ENCODE measurements at regions of chr21 and their contacts with region 1.

Region 1: DNA sequence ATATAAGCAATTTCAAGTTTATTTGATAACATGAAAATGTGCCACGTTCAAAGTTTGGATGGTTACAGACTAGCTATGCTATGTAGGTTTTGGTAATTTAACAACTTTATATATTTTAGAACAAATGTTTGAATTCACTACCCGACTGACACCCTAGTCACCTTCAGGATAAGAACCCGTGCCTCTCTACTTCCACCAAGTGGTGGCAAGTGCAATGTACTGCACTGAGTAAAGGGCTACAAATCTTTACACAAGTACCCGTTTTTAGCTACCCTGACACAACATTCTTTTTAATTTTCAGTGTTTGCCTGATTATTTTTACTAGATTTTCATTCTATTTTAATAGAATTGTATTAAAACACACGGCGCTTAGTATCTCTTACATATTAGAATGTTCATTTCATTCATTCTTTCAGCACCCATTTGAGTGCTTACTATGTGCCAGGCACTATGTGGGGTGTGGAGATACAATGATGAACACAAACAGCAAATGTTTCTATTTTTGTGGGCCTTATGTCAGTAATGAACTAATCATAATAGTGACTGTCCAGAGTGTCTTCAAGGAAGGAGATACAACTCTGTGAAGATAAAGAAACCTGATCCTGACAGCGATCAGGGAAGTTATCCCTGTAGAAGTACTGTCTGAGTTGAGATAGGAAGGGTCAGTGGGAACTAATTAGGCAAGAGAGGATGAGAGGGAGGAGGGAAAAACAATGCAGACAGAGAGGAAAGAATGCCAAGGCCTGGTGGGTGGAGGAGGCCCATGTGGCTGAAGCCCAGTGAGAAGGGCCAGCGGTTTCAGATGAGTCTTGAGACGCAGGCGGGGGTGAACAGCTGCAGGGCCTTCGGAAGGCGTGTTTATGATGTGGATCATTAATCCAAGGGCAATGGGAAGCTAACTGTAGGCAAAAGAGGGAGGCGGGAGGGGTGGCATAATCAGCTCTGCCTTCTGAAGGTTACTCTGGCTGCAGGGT is 3.8 kb downstream of the LCA5L start:
- DNase-seq: no peak
- H3K4me3 ChIP-seq: no peak overlapping the region
- H3K27ac ChIP-seq: no peak overlapping the region
- H3K4me1 ChIP-seq: peaks cover 0 to 7% (median 1%) of the 10 kb centered on the region in 4 experiments; a peak in 4 of 7 replicates
- H3K27me3 ChIP-seq: no peaks in the 10 kb centered on the region
- CTCF ChIP-seq: peak; percentile 35 to 80 (median 78)
- EP300 ChIP-seq: no peak
- POLR2A ChIP-seq: no peak
- RAD21 ChIP-seq: peak; percentile 82 to 89

Region 2: DNA sequence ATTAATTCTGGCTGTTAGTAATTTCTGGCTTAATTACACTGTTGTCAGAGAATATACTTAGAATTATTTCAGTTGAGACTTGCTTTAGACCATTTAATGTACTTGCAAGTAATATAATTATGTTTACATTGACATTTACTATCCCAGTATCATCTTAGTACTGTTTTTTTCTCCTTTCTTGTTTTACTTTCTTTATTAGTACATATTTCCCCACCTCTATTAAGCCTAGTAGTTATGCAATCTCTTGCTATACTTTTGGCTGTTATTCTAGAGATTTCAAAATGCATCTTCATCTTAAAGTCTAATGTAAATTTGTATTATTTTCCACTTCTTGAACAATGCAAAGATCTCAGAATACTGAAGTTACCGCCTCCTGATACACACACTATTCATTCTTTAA is 152.8 kb before region 1 on chr21:
- CTCF ChIA-PET with region 1: no interaction called
- POLR2A ChIA-PET with region 1: no interaction called
- DNase-seq: no peak
- H3K4me3 ChIP-seq: no peak overlapping the region
- H3K27ac ChIP-seq: no peak overlapping the region
- H3K4me1 ChIP-seq: no peaks in the 10 kb centered on the region
- H3K27me3 ChIP-seq: no peaks in the 10 kb centered on the region
- CTCF ChIP-seq: no peak
- EP300 ChIP-seq: no peak
- POLR2A ChIP-seq: no peak
- RAD21 ChIP-seq: no peak

Region 3: GRCh38 chr21:39373644-39374043 is 68.1 kb before region 1 on chr21:
- CTCF ChIA-PET with region 1: interaction called, 30 read pairs
- POLR2A ChIA-PET with region 1: no interaction called
- DNase-seq: no peak
- H3K4me3 ChIP-seq: no peak overlapping the region
- H3K27ac ChIP-seq: no peak overlapping the region
- H3K4me1 ChIP-seq: peaks cover 0 to 5% (median 3%) of the 10 kb centered on the region in 4 experiments; a peak in 3 of 7 replicates
- H3K27me3 ChIP-seq: no peaks in the 10 kb centered on the region
- CTCF ChIP-seq: peak in 2 of 3 experiments; percentile 20 to 49; a peak in 3 of 4 replicates
- EP300 ChIP-seq: no peak
- POLR2A ChIP-seq: no peak
- RAD21 ChIP-seq: peak; percentile 43 to 57

Region 4: DNA sequence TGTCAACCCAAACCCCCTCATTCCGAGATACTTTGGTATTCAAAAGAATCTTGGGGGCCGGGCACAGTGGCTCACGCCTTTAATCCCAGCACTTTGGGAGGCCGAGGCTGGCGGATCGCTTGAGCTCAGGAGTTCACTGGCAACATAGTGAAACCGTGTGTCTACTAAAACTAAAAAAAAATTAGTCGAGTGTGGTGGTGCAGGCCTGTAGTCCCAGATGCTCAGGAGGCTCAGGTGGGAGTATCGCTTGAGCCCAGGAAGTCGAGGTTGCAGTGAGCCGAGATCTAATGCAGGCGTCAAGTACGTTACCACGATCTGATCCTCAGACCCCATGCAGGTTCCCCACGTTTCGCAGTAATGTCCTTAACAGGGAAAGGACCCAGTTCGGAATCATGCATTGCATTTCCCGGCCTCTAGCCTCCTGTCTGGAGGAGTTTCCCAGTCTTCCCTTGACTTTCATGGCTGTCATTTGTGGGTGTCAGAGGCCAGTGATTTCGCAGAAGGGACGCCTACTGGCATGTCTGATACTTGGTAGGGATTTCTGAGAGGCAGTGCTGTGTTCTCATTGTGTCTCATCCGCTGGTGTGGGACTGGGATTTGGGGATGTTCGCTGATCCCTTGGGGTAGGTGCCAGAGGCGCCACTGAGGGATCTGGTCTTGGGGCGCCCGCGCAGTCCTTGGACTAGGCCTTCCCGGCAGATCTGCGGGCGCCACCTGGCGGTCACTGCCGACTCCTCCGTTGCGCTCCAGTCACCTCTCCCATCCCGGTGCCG is 53.6 kb before region 1 on chr21:
- CTCF ChIA-PET with region 1: interaction called, 47 read pairs
- POLR2A ChIA-PET with region 1: interaction called, 3 read pairs
- DNase-seq: peak; percentile 79 to 99
- H3K4me3 ChIP-seq: peak overlapping the region; percentile 4 to 55 (median 38); a peak in 6 of 8 replicates
- H3K27ac ChIP-seq: no peak overlapping the region
- H3K4me1 ChIP-seq: peaks cover 0 to 2% (median 0%) of the 10 kb centered on the region in 4 experiments; a peak in 1 of 7 replicates
- H3K27me3 ChIP-seq: no peaks in the 10 kb centered on the region
- CTCF ChIP-seq: peak; percentile 91 to 94 (median 92)
- EP300 ChIP-seq: no peak
- POLR2A ChIP-seq: no peak
- RAD21 ChIP-seq: peak; percentile 87 to 92

Region 5: GRCh38 chr21:39397646-39398385 is 44.0 kb before region 1 on chr21:
- CTCF ChIA-PET with region 1: interaction called, 47 read pairs
- POLR2A ChIA-PET with region 1: interaction called, 3 read pairs
- DNase-seq: no peak
- H3K4me3 ChIP-seq: no peak overlapping the region
- H3K27ac ChIP-seq: no peak overlapping the region
- H3K4me1 ChIP-seq: no peaks in the 10 kb centered on the region
- H3K27me3 ChIP-seq: no peaks in the 10 kb centered on the region
- CTCF ChIP-seq: no peak
- EP300 ChIP-seq: no peak
- POLR2A ChIP-seq: no peak
- RAD21 ChIP-seq: no peak

Region 6: GRCh38 chr21:39406065-39406464 is 35.7 kb before region 1 on chr21:
- CTCF ChIA-PET with region 1: interaction called, 27 read pairs
- POLR2A ChIA-PET with region 1: no interaction called
- DNase-seq: no peak
- H3K4me3 ChIP-seq: no peak overlapping the region
- H3K27ac ChIP-seq: no peak overlapping the region
- H3K4me1 ChIP-seq: no peaks in the 10 kb centered on the region
- H3K27me3 ChIP-seq: no peaks in the 10 kb centered on the region
- CTCF ChIP-seq: no peak
- EP300 ChIP-seq: no peak
- POLR2A ChIP-seq: no peak
- RAD21 ChIP-seq: no peak

Region 7: DNA sequence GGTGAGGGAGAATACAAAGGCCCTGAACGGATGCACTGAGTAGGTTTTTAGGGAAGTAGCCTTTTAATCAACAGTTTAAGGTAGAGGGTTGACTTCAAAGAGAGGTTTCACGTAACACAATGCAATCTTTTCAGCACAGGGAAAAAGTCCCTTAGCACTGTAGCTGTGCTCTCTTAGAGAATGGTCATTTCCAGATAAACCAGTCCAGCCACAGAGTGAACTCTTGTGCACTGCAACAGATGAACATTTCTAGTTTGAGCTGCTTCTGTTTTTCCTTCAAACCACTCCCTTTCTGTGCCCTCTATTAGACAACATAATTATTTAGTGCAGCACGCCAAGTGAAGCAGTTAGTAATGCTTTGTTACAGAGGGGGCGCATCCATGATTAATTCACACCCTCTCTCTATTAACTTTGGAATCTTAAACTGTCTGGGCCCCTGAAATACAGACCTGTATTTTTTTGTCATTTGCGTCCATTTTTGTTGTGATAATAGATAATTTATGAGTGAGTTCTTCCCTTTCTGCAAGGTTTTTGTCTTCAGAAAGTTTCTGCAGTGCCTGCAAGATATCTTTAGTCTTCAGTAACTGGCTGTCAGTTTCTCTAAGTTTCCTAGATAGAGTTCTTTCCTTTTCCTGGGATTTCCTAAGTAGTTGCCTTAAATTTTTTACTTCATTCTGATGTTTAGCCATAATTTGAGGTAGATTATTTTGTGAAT is 19.1 kb before region 1 on chr21:
- CTCF ChIA-PET with region 1: interaction called, 11 read pairs
- POLR2A ChIA-PET with region 1: interaction called, 3 read pairs
- DNase-seq: no peak
- H3K4me3 ChIP-seq: no peak overlapping the region
- H3K27ac ChIP-seq: no peak overlapping the region
- H3K4me1 ChIP-seq: peaks cover 0 to 2% (median 0%) of the 10 kb centered on the region in 4 experiments; a peak in 1 of 7 replicates
- H3K27me3 ChIP-seq: no peaks in the 10 kb centered on the region
- CTCF ChIP-seq: no peak
- EP300 ChIP-seq: no peak
- POLR2A ChIP-seq: no peak
- RAD21 ChIP-seq: no peak

Region 8: DNA sequence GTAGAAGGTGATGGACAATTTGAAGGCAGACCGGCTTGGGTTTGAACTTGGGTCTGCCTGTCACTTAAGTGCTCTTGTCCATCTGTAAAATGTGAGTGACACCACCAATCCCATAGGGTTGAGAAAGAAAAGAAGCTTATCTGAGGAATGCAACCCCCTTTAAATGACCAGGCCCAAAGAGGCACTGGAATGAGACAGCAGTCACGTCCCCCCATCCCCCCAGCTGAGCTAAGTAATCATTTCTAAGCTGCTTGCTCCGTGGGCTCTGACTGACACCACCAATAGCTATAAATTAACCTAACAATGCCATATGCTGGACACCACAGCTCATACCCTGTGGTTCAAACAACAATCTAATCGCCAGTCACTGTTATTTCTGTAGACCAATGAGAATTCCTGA is 11.3 kb before region 1 on chr21:
- CTCF ChIA-PET with region 1: interaction called, 54 read pairs
- POLR2A ChIA-PET with region 1: interaction called, 6 read pairs
- DNase-seq: no peak
- H3K4me3 ChIP-seq: no peak overlapping the region; a peak in 1 of 8 replicates
- H3K27ac ChIP-seq: no peak overlapping the region
- H3K4me1 ChIP-seq: peaks cover 0 to 10% (median 5%) of the 10 kb centered on the region in 4 experiments; a peak in 4 of 7 replicates
- H3K27me3 ChIP-seq: no peaks in the 10 kb centered on the region; a peak in 1 of 7 replicates
- CTCF ChIP-seq: no peak
- EP300 ChIP-seq: no peak
- POLR2A ChIP-seq: no peak
- RAD21 ChIP-seq: no peak

Region 9: DNA sequence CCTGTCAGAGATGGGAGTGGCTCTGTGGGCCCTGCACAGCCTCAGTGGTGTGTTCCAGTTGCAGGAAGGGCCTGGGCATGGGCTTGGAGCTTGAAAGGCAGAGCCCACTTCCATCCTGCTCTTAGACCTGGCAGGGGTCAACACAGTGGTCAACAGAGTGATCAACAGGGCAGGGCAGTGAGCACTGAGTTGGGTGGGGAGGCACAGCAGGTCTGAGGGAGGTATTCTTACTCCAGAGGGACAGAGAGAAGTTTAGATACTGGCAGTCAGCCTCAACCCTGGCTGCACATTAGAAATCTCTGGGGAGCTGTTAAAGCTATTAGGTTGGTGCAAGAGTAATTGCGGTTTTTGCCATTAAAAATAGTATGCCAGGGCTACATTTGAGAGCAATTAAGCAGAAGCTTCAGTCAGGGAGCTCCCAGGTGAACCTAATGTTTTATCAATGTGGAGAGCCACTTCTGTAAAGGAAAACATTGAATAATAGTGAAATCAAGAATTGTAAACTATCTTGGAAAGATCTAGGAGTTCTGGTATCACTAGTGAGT is 47.7 kb after region 1 on chr21:
- CTCF ChIA-PET with region 1: no interaction called
- POLR2A ChIA-PET with region 1: no interaction called
- DNase-seq: no peak
- H3K4me3 ChIP-seq: no peak overlapping the region
- H3K27ac ChIP-seq: no peak overlapping the region
- H3K4me1 ChIP-seq: no peaks in the 10 kb centered on the region
- H3K27me3 ChIP-seq: no peaks in the 10 kb centered on the region
- CTCF ChIP-seq: no peak
- EP300 ChIP-seq: no peak
- POLR2A ChIP-seq: no peak
- RAD21 ChIP-seq: no peak

Measured in H1 (cell line).